PC-9 (cell line): ENCODE measurements at regions of chr2 and their contacts with region 1.

Region 1: DNA sequence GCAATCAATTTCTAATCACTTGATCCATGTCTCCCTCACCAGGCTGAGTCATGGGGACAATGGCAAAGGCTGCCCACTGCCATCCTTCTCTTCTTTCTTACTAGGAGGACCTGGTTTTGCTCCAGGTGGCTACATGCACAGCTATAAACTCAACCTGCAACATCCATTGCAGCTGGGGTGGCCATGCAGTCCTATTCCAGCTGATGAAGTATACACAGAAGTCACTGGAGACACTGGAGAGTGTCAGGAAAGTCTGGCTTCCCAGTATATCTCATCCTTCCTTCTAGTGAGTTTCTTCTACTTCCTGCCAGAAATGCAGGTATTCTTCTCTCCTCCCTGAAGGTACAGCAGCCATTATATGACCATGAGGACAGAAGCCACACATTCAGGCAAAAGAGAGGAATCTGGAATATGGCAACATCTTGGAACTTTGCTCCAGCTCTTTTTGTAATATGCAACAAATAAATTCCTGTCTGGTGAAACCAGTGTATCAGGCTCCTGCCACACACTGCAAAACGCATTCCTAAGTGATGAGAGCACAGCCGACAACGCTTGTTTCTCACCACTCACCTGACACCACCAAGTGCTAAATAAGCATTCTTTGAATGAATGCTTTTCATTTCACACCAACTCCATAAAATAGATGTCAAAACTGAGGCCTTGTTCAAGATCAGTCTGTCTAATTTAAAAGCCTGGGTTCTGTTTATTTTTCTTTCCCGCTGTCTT is 32.3 kb downstream of the SCTR start:
- DNase-seq: peak; percentile 77 to 97
- H3K4me3 ChIP-seq: no peak overlapping the region
- H3K27ac ChIP-seq: peak overlapping the region; percentile 83
- H3K4me1 ChIP-seq: peaks cover 34% of the 10 kb centered on the region
- H3K27me3 ChIP-seq: no peaks in the 10 kb centered on the region
- CTCF ChIP-seq: no peak; the same call in 1 of the 2 replicates

Region 2: DNA sequence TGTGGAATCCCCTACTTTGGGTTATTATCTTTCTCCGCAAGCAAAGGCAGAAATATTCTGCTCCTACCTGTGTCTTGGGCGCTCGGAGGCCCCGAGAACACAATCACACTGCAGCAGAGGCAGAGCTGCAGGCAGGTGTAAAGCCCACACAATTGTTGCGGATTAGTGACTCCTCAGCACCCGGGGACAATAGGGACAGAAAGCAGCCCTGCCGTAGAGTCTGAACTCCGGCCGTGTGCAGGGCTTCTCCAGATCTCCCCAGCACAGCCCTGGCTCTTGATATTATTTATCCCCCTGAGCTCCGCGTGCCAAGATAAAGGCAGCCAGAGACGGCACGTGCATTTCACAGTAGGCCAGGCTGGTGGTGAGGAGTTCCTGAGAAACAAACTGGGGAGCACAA is 873.7 kb before region 1 on chr2:
- CTCF ChIA-PET with region 1: no interaction called
- POLR2A ChIA-PET with region 1: no interaction called
- intact Hi-C with region 1: no loop called
- DNase-seq: no peak
- H3K4me3 ChIP-seq: no peak overlapping the region
- H3K27ac ChIP-seq: no peak overlapping the region
- H3K4me1 ChIP-seq: no peaks in the 10 kb centered on the region
- H3K27me3 ChIP-seq: peaks cover 81% of the 10 kb centered on the region
- CTCF ChIP-seq: no peak

Region 3: DNA sequence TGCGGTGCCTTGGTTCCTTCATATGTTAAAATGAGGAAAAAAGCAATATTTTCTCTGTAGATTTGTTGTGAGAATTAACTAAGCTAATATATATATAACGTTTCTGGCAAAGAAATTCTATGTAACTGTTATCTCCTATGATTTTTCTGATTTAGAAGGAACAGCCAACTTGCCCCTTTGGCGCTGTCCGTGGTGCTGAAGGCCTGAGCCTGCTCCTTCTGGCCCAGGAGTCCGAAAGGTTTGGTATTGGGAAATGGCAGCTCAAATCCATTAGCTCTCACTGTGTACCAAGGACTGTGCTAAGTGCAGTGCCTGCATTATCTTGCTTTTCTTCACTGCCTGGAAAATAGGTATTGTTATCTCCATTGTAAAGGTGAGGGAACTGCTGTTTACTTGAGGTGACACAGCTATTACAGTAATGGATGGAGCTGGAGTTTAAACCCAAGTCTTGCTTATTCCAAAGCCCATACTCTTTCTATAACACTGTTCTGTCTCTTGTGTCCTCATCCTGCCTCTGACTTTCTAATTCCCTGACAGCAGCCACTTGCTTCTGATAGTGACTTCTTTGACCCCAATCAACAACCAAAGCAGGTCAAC is 385.6 kb before region 1 on chr2:
- CTCF ChIA-PET with region 1: no interaction called
- POLR2A ChIA-PET with region 1: no interaction called
- intact Hi-C with region 1: no loop called
- DNase-seq: peak in 1 of 2 experiments; percentile 44
- H3K4me3 ChIP-seq: no peak overlapping the region
- H3K27ac ChIP-seq: no peak overlapping the region
- H3K4me1 ChIP-seq: no peaks in the 10 kb centered on the region
- H3K27me3 ChIP-seq: no peaks in the 10 kb centered on the region
- CTCF ChIP-seq: no peak

Region 4: GRCh38 chr2:119366649-119367471 is 125.1 kb before region 1 on chr2 and contains the starts of genes C2orf76 and DBI:
- CTCF ChIA-PET with region 1: no interaction called
- POLR2A ChIA-PET with region 1: no interaction called
- intact Hi-C with region 1: loop called (anchors 2 kb)
- DNase-seq: peak; percentile 97 to 98
- H3K4me3 ChIP-seq: peak within 1 kb of the TSS; percentile 94
- H3K27ac ChIP-seq: peak within 1 kb of the TSS; percentile 48
- H3K4me1 ChIP-seq: peaks cover 27% of the 10 kb centered on the region
- H3K27me3 ChIP-seq: no peaks in the 10 kb centered on the region
- CTCF ChIP-seq: no peak
- total RNA-seq, gene C2orf76: 11.5 and 12.7 TPM in 2 replicates
- total RNA-seq, gene DBI: 128 and 265 TPM in 2 replicates

Region 5: GRCh38 chr2:119517433-119517832 is 25.5 kb after region 1 on chr2:
- CTCF ChIA-PET with region 1: no interaction called
- POLR2A ChIA-PET with region 1: no interaction called
- intact Hi-C with region 1: no loop called
- DNase-seq: peak in 1 of 2 experiments; percentile 32
- H3K4me3 ChIP-seq: no peak overlapping the region
- H3K27ac ChIP-seq: no peak overlapping the region
- H3K4me1 ChIP-seq: no peaks in the 10 kb centered on the region
- H3K27me3 ChIP-seq: peaks cover 23% of the 10 kb centered on the region; the same call in 1 of the 2 replicates
- CTCF ChIP-seq: peak; percentile 84

Region 6: GRCh38 chr2:119647440-119648169 is 155.6 kb after region 1 on chr2:
- CTCF ChIA-PET with region 1: no interaction called
- POLR2A ChIA-PET with region 1: no interaction called
- intact Hi-C with region 1: loop called (anchors 5 kb)
- DNase-seq: peak; percentile 47 to 65
- H3K4me3 ChIP-seq: no peak overlapping the region
- H3K27ac ChIP-seq: no peak overlapping the region
- H3K4me1 ChIP-seq: peaks cover 26% of the 10 kb centered on the region
- H3K27me3 ChIP-seq: no peaks in the 10 kb centered on the region
- CTCF ChIP-seq: no peak

Region 7: GRCh38 chr2:119678998-119679710 is 187.2 kb after region 1 on chr2 and contains the start of gene TMEM177:
- CTCF ChIA-PET with region 1: no interaction called
- POLR2A ChIA-PET with region 1: no interaction called
- intact Hi-C with region 1: loop called (anchors 10 kb)
- DNase-seq: peak; percentile 81 to 92
- H3K4me3 ChIP-seq: peak within 1 kb of the TSS; percentile 87
- H3K27ac ChIP-seq: no peak within 1 kb of the TSS
- H3K4me1 ChIP-seq: peaks cover 10% of the 10 kb centered on the region
- H3K27me3 ChIP-seq: no peaks in the 10 kb centered on the region
- CTCF ChIP-seq: no peak
- total RNA-seq, gene TMEM177: 18.2 and 18.4 TPM in 2 replicates